Breast epithelium (tissue), 4 donors: ENCODE measurements at regions of chr21 and their contacts with region 1.

Region 1: DNA sequence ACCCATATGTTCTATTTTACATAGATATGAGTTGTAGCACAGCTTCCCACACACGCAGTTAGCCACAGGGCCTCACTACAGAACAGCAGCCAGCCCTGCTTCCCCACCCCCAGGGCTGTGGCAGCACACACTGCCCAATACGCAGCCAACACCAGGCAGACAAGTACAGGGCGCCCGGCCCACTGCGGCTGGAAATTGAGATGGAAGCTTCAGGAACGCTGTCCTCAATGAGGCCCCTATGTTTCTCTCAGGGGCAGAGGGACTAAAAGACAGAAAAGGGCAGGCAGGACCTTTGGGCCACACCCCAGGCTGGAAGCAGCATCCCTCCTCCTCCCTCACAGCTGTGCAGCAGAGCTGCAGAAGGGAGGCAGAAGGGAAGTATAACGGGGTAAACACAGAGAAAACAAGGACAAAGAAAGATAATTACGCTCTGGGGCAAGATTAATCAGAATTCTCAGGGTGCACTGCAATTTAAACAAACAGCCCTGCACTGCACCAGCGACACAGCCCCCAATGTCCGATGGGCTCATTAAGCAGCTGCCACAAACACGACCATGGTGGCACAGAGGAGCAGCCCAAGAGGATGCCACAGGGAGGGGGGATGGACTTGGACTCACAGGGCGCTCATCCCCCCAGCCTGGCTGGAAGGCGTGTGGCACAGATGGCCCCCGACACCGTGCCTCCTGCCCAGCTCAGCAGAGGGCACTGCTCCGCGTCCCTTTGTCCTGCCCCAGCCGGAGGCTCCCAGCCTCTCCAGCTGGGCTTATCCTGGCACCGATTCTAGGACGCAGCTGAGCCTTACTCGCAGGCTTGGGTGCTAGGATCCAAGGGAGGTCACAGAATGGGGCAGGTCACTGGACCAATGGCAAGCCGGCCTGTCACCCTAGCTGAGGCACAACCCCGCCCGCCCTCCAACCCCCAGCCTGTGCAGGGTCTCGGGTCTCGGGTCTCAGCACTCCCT is 14.2 kb downstream of the WDR4 start:
- DNase-seq: no peak
- H3K4me3 ChIP-seq: no peak overlapping the region
- H3K27ac ChIP-seq: no peak overlapping the region
- H3K4me1 ChIP-seq: no peaks in the 10 kb centered on the region
- H3K27me3 ChIP-seq: no peaks in the 10 kb centered on the region
- CTCF ChIP-seq: no peak
- POLR2A ChIP-seq: no peak

Region 2: DNA sequence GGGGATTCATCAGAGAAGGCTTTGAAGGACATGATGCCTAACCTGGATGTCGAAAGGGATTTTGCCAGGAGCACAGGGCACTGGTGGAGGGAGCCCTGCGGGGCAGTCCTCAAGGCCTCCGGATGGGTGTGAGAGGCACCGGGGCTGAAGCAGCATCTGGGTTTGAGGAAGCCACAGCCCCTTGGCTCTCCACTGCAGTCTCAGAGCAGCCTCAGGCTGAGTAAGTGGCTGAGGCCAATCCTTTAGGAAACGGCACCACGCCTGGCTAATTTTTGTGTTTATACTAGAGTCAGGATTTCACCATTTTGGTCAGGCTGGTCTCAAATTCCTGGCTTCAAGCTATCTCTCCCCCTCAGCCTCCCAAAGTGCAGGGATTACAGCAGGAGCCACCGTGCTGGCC is 48.4 kb after region 1 on chr21:
- intact Hi-C with region 1: loop called (anchors 5 kb)
- DNase-seq: no peak
- H3K4me3 ChIP-seq: no peak overlapping the region
- H3K27ac ChIP-seq: no peak overlapping the region
- H3K4me1 ChIP-seq: no peaks in the 10 kb centered on the region
- H3K27me3 ChIP-seq: no peaks in the 10 kb centered on the region
- CTCF ChIP-seq: no peak
- POLR2A ChIP-seq: no peak

Region 3: GRCh38 chr21:42923541-42924432 is 58.7 kb after region 1 on chr21:
- intact Hi-C with region 1: no loop called
- DNase-seq: peak; percentile 70 to 74
- H3K4me3 ChIP-seq: peak overlapping the region in 1 of 3 donors; percentile 52
- H3K27ac ChIP-seq: peak overlapping the region in 1 of 2 donors; percentile 43
- H3K4me1 ChIP-seq: no peaks in the 10 kb centered on the region
- H3K27me3 ChIP-seq: no peaks in the 10 kb centered on the region
- CTCF ChIP-seq: peak; percentile 79 to 91 (median 86)
- POLR2A ChIP-seq: no peak